ENCODE measurements at regions of chr17 and their contacts with region 1.

Region 1: DNA sequence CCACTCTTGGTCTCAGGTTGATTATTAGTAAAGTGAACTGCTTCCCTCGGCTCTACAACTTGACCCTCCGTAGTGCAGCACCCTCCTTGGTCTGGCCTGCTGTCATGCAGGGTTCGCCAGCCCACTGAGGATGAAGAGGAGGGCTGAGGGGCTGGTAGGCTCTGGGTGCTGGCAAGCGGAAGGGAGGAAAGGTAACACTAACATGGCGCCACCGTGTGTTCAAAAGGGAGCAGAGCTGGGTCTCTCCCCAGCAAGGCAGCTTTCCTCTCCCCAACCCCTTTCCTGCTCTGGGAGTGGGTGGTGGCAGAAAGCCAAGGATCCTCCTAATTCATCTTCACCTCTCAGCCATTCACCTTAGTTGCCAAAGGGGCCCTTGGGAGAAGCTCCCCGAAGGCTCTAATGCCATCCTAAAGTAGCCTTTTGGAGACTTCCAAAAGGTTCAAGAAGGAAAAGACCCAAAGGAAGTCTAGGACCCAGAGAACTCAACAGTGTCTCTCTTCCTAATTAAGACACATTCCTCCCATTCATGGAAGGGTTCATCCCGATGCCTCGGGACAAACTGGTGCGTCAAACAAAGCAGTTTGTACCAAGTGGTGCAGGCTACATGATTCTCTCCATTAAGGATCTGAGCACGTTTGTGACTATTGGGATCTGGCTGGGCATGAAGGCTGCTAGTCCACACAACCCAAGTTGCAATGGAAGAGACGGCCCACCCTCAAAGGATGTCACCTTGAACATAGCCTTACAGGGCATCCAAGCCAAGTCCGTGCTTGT is 90.8 kb upstream of the TOB1 start:
- DNase-seq: peak; percentile 31
- ATAC-seq: peak; percentile 89
- H3K4me3 ChIP-seq: no peak overlapping the region
- H3K27ac ChIP-seq: no peak overlapping the region
- H3K4me1 ChIP-seq: peaks cover 23 to 41% of the 10 kb centered on the region in 2 experiments
- H3K27me3 ChIP-seq: no peaks in the 10 kb centered on the region
- CTCF ChIP-seq: peak; percentile 79 to 94 (median 90)
- POLR2A ChIP-seq: no peak
- RAD21 ChIP-seq: peak; percentile 84

Region 2: GRCh38 chr17:50774225-50774803 is 182.6 kb before region 1 on chr17:
- CTCF ChIA-PET with region 1: no interaction called
- POLR2A ChIA-PET with region 1: no interaction called
- RAD21 ChIA-PET with region 1: no interaction called
- intact Hi-C with region 1: no loop called
- DNase-seq: no peak
- ATAC-seq: 0 out of 2 replicates have a peak, but pooled peaks have one; percentile 52
- H3K4me3 ChIP-seq: no peak overlapping the region
- H3K27ac ChIP-seq: no peak overlapping the region
- H3K4me1 ChIP-seq: no peaks in the 10 kb centered on the region
- H3K27me3 ChIP-seq: no peaks in the 10 kb centered on the region
- CTCF ChIP-seq: 0 out of 6 replicates have a peak, but pooled peaks of 1 of the 3 experiments have one; percentile 19
- POLR2A ChIP-seq: no peak
- RAD21 ChIP-seq: no peak

Region 3: GRCh38 chr17:50919321-50920085 is 37.4 kb before region 1 on chr17:
- CTCF ChIA-PET with region 1: no interaction called
- POLR2A ChIA-PET with region 1: no interaction called
- RAD21 ChIA-PET with region 1: no interaction called
- intact Hi-C with region 1: no loop called
- DNase-seq: no peak
- ATAC-seq: peak; percentile 39
- H3K4me3 ChIP-seq: no peak overlapping the region
- H3K27ac ChIP-seq: no peak overlapping the region; the same call in 1 of the 2 replicates
- H3K4me1 ChIP-seq: peaks cover 3 to 11% of the 10 kb centered on the region in 2 experiments; a peak in 2 of 4 replicates
- H3K27me3 ChIP-seq: no peaks in the 10 kb centered on the region
- CTCF ChIP-seq: no peak
- POLR2A ChIP-seq: no peak
- RAD21 ChIP-seq: no peak

Region 4: GRCh38 chr17:50967795-50968194 is 10.9 kb after region 1 on chr17:
- CTCF ChIA-PET with region 1: interaction called, 10 read pairs
- POLR2A ChIA-PET with region 1: no interaction called
- RAD21 ChIA-PET with region 1: no interaction called
- intact Hi-C with region 1: no loop called
- DNase-seq: no peak
- ATAC-seq: no peak
- H3K4me3 ChIP-seq: no peak overlapping the region
- H3K27ac ChIP-seq: no peak overlapping the region
- H3K4me1 ChIP-seq: no peaks in the 10 kb centered on the region
- H3K27me3 ChIP-seq: no peaks in the 10 kb centered on the region
- CTCF ChIP-seq: no peak
- POLR2A ChIP-seq: no peak
- RAD21 ChIP-seq: no peak

Measured in HCT116 (cell line).